Activated naive CD8-positive, alpha-beta T cell treated with anti-CD3 and anti-CD28 coated beads, Interleukin-2, amount 10 ng/mL, durations not matched to agents 7 days and 5 days (primary cell): ENCODE measurements at regions of chr6 and their contacts with region 1.

Region 1: DNA sequence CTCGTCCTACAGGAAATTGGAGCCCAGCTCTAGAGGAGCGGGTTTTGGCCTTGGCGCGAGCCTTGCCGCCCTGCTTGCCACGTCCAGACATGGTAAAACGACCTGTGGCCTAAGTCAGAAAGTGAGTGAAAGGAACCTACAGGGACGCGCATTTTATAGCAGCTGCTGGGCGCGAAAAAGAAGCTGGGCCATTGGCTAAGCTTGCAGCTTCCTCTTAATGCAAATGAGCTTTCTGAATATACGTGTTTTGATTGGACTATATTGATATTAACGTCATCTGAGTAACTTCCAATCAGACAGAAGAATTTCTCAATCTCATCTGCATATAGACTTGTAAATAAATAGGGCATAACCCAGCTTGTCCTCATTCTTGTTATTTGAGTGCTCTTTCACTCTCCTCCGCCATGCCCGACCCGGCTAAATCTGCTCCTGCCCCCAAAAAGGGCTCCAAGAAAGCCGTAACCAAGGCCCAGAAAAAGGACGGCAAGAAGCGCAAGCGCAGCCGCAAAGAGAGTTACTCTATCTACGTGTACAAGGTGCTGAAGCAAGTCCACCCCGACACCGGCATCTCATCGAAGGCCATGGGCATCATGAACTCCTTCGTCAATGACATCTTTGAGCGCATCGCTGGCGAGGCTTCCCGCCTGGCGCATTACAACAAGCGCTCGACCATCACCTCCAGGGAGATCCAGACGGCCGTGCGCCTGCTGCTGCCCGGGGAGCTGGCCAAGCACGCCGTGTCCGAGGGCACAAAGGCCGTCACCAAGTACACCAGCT is 18.9 kb downstream of the OR2B2 start:
- DNase-seq: peak; percentile 82
- ATAC-seq: peak; percentile 55
- H3K4me3 Mint-ChIP-seq: no peak overlapping the region
- H3K27ac Mint-ChIP-seq: no peak overlapping the region
- H3K4me1 Mint-ChIP-seq: peaks cover 43% of the 10 kb centered on the region
- H3K27me3 Mint-ChIP-seq: no peaks in the 10 kb centered on the region

Region 2: GRCh38 chr6:26025894-26026832 is 1867.1 kb before region 1 on chr6:
- POLR2A ChIA-PET with region 1: interaction called, 33 read pairs
- DNase-seq: peak; percentile 86
- ATAC-seq: peak; percentile 35
- H3K4me3 Mint-ChIP-seq: peak overlapping the region; percentile 89
- H3K27ac Mint-ChIP-seq: peak overlapping the region; percentile 99
- H3K4me1 Mint-ChIP-seq: peaks cover 75% of the 10 kb centered on the region
- H3K27me3 Mint-ChIP-seq: no peaks in the 10 kb centered on the region

Region 3: DNA sequence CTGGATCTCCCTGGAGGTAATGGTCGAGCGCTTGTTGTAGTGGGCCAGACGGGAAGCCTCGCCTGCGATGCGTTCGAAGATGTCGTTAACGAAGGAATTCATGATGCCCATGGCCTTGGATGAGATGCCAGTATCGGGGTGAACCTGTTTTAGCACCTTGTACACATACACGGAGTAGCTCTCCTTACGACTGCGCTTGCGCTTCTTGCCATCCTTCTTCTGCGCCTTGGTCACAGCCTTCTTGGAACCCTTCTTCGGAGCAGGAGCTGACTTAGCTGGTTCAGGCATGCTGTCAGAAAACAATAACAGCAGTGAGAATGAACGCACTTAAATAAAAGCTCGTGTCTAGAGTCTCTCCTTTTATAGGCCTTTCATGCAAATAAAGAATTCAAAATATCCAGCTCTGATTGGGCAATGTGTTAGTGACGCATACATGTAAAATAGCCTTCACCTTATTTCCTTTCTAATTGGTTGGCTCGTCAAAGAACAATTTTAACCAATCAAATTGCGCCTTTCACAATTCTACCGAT is 1676.8 kb before region 1 on chr6:
- POLR2A ChIA-PET with region 1: interaction called, 15 read pairs
- DNase-seq: peak; percentile 77
- ATAC-seq: peak; percentile 75
- H3K4me3 Mint-ChIP-seq: no peak overlapping the region
- H3K27ac Mint-ChIP-seq: no peak overlapping the region
- H3K4me1 Mint-ChIP-seq: peaks cover 32% of the 10 kb centered on the region
- H3K27me3 Mint-ChIP-seq: no peaks in the 10 kb centered on the region

Region 4: DNA sequence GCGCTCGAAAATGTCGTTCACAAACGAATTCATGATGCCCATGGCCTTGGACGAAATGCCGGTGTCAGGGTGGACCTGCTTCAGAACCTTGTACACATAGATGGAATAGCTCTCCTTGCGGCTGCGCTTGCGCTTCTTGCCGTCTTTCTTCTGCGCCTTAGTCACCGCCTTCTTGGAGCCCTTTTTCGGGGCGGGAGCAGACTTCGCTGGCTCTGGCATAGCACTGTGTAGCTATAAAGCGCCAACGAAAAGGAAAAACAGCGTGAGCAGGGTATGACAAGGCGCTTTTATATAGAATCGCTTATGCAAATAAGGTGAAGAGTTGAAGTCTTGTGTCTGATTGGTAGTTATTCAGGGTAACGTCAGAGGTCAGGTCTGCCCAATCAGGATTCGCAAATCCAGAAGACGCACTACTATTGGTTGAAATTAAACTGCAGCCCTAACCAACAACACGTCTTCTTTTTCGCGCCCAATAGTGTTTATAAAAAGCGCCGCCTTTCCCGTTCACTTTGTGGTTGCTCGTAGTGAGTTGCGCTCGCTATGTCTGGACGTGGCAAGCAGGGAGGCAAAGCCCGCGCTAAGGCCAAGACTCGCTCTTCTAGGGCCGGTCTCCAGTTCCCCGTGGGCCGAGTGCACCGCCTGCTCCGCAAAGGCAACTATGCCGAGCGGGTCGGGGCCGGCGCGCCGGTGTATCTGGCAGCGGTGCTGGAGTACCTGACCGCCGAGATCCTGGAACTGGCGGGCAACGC is 760.5 kb before region 1 on chr6:
- POLR2A ChIA-PET with region 1: interaction called, 158 read pairs
- DNase-seq: peak; percentile 90
- ATAC-seq: peak; percentile 76
- H3K4me3 Mint-ChIP-seq: no peak overlapping the region
- H3K27ac Mint-ChIP-seq: no peak overlapping the region
- H3K4me1 Mint-ChIP-seq: peaks cover 46% of the 10 kb centered on the region
- H3K27me3 Mint-ChIP-seq: no peaks in the 10 kb centered on the region

Region 5: GRCh38 chr6:27795697-27796494 is 97.4 kb before region 1 on chr6:
- POLR2A ChIA-PET with region 1: interaction called, 17 read pairs
- DNase-seq: no peak
- ATAC-seq: peak; percentile 50
- H3K4me3 Mint-ChIP-seq: no peak overlapping the region
- H3K27ac Mint-ChIP-seq: peak overlapping the region; percentile 2
- H3K4me1 Mint-ChIP-seq: peaks cover 38% of the 10 kb centered on the region
- H3K27me3 Mint-ChIP-seq: peaks cover 19% of the 10 kb centered on the region

Region 6: GRCh38 chr6:27864906-27865849 is 28.1 kb before region 1 on chr6:
- POLR2A ChIA-PET with region 1: interaction called, 2,088 read pairs
- DNase-seq: peak; percentile 83
- ATAC-seq: peak; percentile 56
- H3K4me3 Mint-ChIP-seq: peak overlapping the region; percentile 99
- H3K27ac Mint-ChIP-seq: peak overlapping the region; percentile 100
- H3K4me1 Mint-ChIP-seq: peaks cover 57% of the 10 kb centered on the region
- H3K27me3 Mint-ChIP-seq: no peaks in the 10 kb centered on the region

Region 7: GRCh38 chr6:27922949-27923348 is 29.7 kb after region 1 on chr6:
- POLR2A ChIA-PET with region 1: no interaction called
- DNase-seq: no peak
- ATAC-seq: no peak
- H3K4me3 Mint-ChIP-seq: no peak overlapping the region
- H3K27ac Mint-ChIP-seq: no peak overlapping the region
- H3K4me1 Mint-ChIP-seq: no peaks in the 10 kb centered on the region
- H3K27me3 Mint-ChIP-seq: peaks cover 37% of the 10 kb centered on the region

Region 8: GRCh38 chr6:27986928-27987725 is 93.9 kb after region 1 on chr6:
- POLR2A ChIA-PET with region 1: no interaction called
- DNase-seq: no peak
- ATAC-seq: no peak
- H3K4me3 Mint-ChIP-seq: no peak overlapping the region
- H3K27ac Mint-ChIP-seq: no peak overlapping the region
- H3K4me1 Mint-ChIP-seq: no peaks in the 10 kb centered on the region
- H3K27me3 Mint-ChIP-seq: peaks cover 35% of the 10 kb centered on the region